RWPE1 (cell line): ENCODE measurements at regions of chr15 and their contacts with region 1.

Region 1: DNA sequence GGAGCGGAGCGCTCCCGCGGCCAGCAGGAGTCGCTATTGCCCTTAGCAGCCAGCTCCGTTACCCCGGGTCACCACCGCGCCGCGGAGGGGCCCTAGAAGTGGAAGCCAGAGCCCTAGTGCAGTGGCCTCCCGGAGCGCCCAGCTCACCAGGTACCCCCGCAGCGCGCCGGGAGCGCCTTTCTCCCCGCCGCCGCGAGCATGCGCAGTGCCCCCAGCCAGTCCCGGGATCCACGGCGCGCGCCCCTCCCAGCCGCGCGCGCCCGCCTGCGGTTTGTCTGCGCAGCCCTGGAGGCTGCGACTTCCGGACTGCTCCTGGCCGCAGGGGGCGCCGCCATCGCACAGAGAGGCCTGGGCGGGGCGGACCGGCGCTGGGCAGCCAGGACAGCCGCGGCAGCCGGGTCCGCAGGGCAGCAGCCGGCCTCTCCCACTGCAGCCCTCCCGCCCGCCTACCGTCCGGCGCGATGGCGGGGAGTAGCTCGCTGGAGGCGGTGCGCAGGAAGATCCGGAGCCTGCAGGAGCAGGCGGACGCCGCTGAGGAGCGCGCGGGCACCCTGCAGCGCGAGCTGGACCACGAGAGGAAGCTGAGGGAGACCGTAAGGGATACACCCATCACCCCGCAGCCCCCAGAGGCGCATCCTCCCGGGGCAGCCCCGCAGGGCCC is 5.7 kb downstream of the TPM1 start:
- DNase-seq: peak; percentile 87
- H3K27ac ChIP-seq: peak overlapping the region; percentile 78
- CTCF ChIP-seq: peak; percentile 99

Region 2: GRCh38 chr15:62782039-62782791 is 266.0 kb before region 1 on chr15:
- CTCF ChIA-PET with region 1: interaction called, 11 read pairs
- POLR2A ChIA-PET with region 1: no interaction called
- DNase-seq: peak; percentile 74
- H3K27ac ChIP-seq: peak overlapping the region; percentile 28
- CTCF ChIP-seq: peak; percentile 78

Region 3: DNA sequence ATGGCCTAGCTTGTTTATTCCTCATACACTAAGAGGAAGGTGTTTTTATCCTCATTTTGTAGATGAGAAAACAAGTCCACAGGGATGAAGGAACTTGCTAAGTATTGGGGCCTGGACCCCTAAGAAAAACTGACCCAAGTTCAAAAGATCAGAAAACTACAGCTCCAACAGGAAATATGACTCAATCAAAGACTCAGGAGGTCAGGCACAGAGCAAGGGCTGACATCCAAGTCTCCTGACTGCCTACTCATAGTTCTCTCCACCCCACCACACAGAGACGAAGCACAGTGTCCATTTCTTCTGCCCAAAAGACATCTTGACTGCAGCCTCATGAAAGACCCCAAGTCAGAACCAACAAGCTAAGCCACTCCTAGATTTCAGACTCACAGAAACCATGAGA is 32.6 kb before region 1 on chr15:
- CTCF ChIA-PET with region 1: interaction called, 14 read pairs
- POLR2A ChIA-PET with region 1: no interaction called
- DNase-seq: peak; percentile 61
- H3K27ac ChIP-seq: no peak overlapping the region
- CTCF ChIP-seq: no peak

Region 4: DNA sequence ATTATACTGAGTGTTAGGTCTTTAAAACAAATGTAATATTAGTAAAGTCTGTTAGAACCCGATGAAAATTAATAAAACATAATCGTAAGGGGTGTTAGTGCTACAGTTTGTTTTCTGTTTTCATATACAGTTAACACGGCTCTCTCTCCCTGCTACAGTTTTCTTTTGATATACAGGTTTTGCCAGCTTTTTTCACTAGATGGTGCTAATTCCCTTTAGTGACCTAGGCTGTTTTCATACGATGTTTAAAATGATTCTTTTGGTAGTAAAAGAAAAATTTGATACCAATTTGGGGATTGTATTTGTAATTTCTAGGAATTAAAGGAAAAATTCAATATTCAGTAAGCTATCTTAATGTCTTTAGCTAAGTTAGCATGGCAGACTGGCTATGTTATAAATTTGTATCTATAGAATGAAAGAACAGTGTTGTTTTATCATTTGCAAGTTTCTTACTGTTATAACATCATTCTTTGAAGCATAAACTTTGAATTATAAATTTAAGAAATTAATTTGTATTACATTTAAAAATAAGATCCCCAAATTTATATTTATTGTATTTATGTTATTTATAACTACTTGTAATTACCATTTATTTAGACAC is 240.6 kb after region 1 on chr15:
- CTCF ChIA-PET with region 1: no interaction called
- POLR2A ChIA-PET with region 1: no interaction called
- DNase-seq: peak; percentile 82
- H3K27ac ChIP-seq: no peak overlapping the region
- CTCF ChIP-seq: peak; percentile 92